Dendritic cell treated with granulocyte-macrophage colony-stimulating factor and Interleukin-4, amounts not matched to agents 40 ng/mL and 50 ng/mL, for 4 days (primary cell): ENCODE measurements at regions of chr16 and their contacts with region 1.

Region 1: GRCh38 chr16:53130159-53131049 is 75.6 kb downstream of the CHD9 start:
- H3K4me3 Mint-ChIP-seq: peak overlapping the region; percentile 77
- H3K27ac Mint-ChIP-seq: peak overlapping the region; percentile 88
- H3K4me1 Mint-ChIP-seq: peaks cover 30% of the 10 kb centered on the region
- H3K27me3 Mint-ChIP-seq: no peaks in the 10 kb centered on the region

Region 2: DNA sequence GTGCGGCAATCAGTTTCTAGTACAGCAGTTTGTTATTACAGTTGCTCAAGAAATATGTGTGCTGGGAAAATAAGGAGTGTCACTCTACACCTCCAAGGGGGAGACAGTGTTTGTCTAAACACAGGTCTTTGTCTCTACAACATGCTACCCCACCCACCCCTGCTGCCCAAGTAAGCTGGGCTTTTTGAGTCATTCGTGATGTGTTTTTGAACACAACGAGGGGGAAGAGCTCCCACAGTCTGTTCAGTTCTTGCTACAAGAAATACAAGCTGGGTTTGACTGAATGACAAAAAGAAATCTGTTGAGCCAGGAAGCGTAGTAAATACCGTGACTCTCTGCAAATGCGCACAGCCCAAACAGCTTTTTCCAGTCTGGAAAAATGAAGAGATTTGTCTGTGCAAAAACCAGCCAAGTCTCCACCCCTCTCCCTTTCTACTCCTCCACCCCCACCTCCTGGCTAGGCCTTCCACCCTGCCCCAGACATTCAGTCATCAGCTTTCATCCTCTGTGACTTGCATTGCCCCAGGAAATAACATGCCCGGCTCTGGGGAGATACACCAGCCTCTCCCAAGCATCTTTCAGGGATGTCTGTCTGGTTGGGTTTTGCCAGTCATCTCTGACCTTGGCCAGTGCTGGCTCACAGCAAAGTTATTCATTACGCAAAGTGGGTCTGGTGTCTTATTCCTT is 49.9 kb before region 1 on chr16:
- intact Hi-C with region 1: no loop called
- H3K4me3 Mint-ChIP-seq: no peak overlapping the region
- H3K27ac Mint-ChIP-seq: peak overlapping the region; percentile 16
- H3K4me1 Mint-ChIP-seq: peaks cover 59% of the 10 kb centered on the region
- H3K27me3 Mint-ChIP-seq: no peaks in the 10 kb centered on the region

Region 3: GRCh38 chr16:53099318-53100130 is 30.9 kb before region 1 on chr16:
- intact Hi-C with region 1: loop called (anchors 2 kb)
- H3K4me3 Mint-ChIP-seq: peak overlapping the region; percentile 82
- H3K27ac Mint-ChIP-seq: peak overlapping the region; percentile 95
- H3K4me1 Mint-ChIP-seq: peaks cover 39% of the 10 kb centered on the region
- H3K27me3 Mint-ChIP-seq: no peaks in the 10 kb centered on the region

Region 4: GRCh38 chr16:53142823-53143568 is 12.6 kb after region 1 on chr16:
- intact Hi-C with region 1: no loop called
- H3K4me3 Mint-ChIP-seq: no peak overlapping the region
- H3K27ac Mint-ChIP-seq: no peak overlapping the region
- H3K4me1 Mint-ChIP-seq: peaks cover 26% of the 10 kb centered on the region
- H3K27me3 Mint-ChIP-seq: no peaks in the 10 kb centered on the region

Region 5: GRCh38 chr16:53207810-53208752 is 77.7 kb after region 1 on chr16:
- intact Hi-C with region 1: loop called (anchors 2 kb)
- H3K4me3 Mint-ChIP-seq: peak overlapping the region; percentile 76
- H3K27ac Mint-ChIP-seq: peak overlapping the region; percentile 94
- H3K4me1 Mint-ChIP-seq: peaks cover 23% of the 10 kb centered on the region
- H3K27me3 Mint-ChIP-seq: no peaks in the 10 kb centered on the region

Region 6: GRCh38 chr16:53503270-53503923 is 373.0 kb after region 1 on chr16:
- intact Hi-C with region 1: loop called (anchors 5 kb)
- H3K4me3 Mint-ChIP-seq: peak overlapping the region; percentile 91
- H3K27ac Mint-ChIP-seq: peak overlapping the region; percentile 93
- H3K4me1 Mint-ChIP-seq: peaks cover 33% of the 10 kb centered on the region
- H3K27me3 Mint-ChIP-seq: peaks cover 15% of the 10 kb centered on the region